Activated naive CD4-positive, alpha-beta T cell treated with anti-CD3 and anti-CD28 coated beads for 36 hours (primary cell): ENCODE measurements at regions of chr2 and their contacts with region 1.

Region 1: DNA sequence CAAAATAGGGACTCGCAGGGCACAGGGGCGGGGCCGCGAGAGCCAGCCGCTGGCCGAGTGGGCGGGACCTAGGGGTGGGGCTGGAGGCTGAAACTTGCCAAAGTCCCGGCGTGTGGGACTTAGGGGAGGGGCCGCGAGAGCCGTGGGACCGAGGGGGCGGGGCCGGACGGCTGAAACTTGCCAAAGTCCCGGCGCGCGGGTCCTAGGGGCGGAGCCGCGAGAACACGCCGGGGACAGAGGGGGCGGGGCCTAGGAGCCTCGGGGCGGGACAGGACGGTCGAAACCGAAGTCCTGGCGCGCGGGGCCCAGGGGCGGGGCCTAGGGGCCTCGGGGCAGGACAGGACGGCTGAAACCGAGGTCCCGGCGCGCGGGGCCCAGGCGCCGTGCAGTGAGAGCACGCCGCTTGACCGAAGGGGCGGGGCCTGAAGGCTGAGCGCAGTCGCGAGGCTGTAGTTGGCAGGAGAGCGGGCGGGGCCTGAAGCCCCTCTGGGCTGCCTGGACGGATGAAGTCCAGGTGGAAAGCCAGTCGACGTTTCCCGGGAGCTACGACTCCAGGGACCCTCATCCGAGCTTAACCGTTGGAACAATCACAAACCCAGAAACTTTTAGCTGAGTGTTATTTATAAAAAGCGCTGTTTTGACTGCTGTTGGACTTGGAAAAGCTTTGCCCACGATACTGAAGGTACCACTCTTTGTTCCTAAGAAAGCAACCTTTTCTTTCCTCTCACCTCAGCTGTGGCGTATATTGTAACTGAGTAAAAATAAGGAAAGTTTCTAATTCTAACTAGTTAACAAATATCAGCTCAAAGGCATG is 475 bp upstream of the BARD1 start:
- DNase-seq: peak; percentile 99
- H3K4me3 Mint-ChIP-seq: peak overlapping the region; percentile 96
- H3K27ac Mint-ChIP-seq: peak overlapping the region; percentile 70
- H3K4me1 Mint-ChIP-seq: peaks cover 24% of the 10 kb centered on the region
- H3K27me3 Mint-ChIP-seq: peaks cover 4% of the 10 kb centered on the region

Region 2: DNA sequence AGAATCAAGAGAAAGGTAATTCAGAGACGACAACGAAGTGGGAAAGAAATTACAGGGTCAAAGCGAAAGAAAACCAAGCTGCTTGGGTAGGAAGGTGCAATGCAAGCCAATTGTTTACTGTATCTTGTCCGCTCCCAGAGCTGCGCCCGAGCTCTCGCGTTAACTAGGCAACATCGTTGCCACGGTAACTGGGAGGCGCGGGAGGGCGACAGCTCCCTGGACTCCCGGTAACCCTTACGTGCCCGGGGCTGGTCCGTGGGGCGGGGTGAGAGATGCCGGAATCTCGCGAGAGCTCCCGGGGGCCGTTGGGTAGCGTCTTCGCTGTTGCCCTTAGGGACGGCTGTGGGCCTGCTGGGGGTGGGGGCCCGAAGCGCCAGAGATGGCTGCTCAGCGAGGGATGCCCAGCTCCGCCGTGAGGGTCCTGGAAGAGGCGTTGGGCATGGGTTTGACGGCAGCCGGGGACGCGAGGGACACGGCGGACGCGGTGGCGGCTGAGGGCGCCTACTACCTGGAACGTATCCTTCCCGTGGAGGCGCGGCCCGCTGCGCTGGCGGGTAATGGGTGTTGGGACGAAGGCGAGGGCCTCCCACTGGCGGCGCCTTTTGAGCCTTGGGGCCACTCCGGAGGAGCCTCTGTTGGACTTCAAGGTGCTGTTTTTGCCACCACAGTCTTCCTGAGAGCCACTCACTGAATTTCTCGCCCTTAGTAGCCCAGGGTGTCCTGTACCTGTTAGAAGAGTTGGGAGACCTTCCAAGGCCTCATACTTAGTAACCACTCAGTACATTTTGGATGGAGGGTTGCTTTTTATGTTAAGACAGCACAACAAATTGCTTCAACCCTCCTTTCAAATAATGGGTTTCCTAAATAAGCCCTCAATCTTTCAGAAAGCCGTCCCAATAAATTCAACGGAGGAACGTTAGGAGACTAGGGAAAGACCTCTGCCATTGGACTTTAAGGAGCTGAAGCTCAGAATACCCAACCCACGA is 1525.6 kb before region 1 on chr2 and contains the start of gene SPAG16:
- CTCF ChIA-PET with region 1: no interaction called
- intact Hi-C with region 1: loop called (anchors 1 kb)
- DNase-seq: peak; percentile 98
- H3K4me3 Mint-ChIP-seq: peak within 1 kb of the TSS; percentile 92
- H3K27ac Mint-ChIP-seq: peak within 1 kb of the TSS; percentile 88
- H3K4me1 Mint-ChIP-seq: peaks cover 32% of the 10 kb centered on the region
- H3K27me3 Mint-ChIP-seq: no peaks in the 10 kb centered on the region
- total RNA-seq, gene SPAG16: 8.4 to 8.8 TPM

Region 3: GRCh38 chr2:214088536-214088935 is 721.4 kb before region 1 on chr2:
- CTCF ChIA-PET with region 1: no interaction called
- intact Hi-C with region 1: no loop called
- DNase-seq: no peak
- H3K4me3 Mint-ChIP-seq: no peak overlapping the region
- H3K27ac Mint-ChIP-seq: no peak overlapping the region
- H3K4me1 Mint-ChIP-seq: no peaks in the 10 kb centered on the region
- H3K27me3 Mint-ChIP-seq: no peaks in the 10 kb centered on the region

Region 4: DNA sequence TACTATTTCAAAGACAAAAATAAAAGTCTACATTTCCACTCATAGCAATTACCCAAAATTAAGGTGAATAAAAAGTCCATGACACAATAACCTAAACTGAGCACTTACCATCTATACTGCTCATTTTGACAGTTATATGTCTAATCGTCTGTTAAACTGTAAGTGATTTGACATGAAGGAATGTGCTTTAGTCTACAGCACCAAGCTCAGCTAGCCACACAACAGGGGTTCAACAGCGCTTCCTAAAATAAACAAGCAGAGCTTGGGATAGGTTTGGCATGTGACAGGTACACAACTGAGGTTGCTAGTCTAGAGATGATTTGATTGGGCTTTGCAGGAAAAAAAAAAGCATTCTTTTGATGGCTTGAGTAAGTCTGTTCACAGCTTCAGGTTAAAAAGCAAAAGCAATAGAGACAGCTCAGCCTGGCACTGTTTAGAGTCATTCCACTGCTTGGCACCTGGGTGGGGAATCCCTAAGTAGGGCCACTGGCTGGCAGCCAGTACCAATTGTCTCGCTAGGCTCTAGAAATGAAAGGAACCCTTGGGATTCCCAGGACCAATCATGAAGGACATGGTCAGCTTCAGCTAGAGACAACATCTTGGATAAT is 79.1 kb before region 1 on chr2:
- CTCF ChIA-PET with region 1: no interaction called
- intact Hi-C with region 1: loop called (anchors 5 kb)
- DNase-seq: peak; percentile 13
- H3K4me3 Mint-ChIP-seq: no peak overlapping the region
- H3K27ac Mint-ChIP-seq: no peak overlapping the region
- H3K4me1 Mint-ChIP-seq: no peaks in the 10 kb centered on the region
- H3K27me3 Mint-ChIP-seq: no peaks in the 10 kb centered on the region

Region 5: GRCh38 chr2:215269397-215270119 is 459.6 kb after region 1 on chr2:
- CTCF ChIA-PET with region 1: no interaction called
- intact Hi-C with region 1: loop called (anchors 2 kb)
- DNase-seq: peak; percentile 69
- H3K4me3 Mint-ChIP-seq: no peak overlapping the region
- H3K27ac Mint-ChIP-seq: no peak overlapping the region
- H3K4me1 Mint-ChIP-seq: peaks cover 3% of the 10 kb centered on the region
- H3K27me3 Mint-ChIP-seq: no peaks in the 10 kb centered on the region

Region 6: GRCh38 chr2:215680605-215681598 is 870.9 kb after region 1 on chr2:
- CTCF ChIA-PET with region 1: no interaction called
- intact Hi-C with region 1: loop called (anchors 2 kb)
- DNase-seq: peak; percentile 60
- H3K4me3 Mint-ChIP-seq: peak overlapping the region; percentile 34
- H3K27ac Mint-ChIP-seq: peak overlapping the region; percentile 65
- H3K4me1 Mint-ChIP-seq: peaks cover 35% of the 10 kb centered on the region
- H3K27me3 Mint-ChIP-seq: no peaks in the 10 kb centered on the region

Region 7: DNA sequence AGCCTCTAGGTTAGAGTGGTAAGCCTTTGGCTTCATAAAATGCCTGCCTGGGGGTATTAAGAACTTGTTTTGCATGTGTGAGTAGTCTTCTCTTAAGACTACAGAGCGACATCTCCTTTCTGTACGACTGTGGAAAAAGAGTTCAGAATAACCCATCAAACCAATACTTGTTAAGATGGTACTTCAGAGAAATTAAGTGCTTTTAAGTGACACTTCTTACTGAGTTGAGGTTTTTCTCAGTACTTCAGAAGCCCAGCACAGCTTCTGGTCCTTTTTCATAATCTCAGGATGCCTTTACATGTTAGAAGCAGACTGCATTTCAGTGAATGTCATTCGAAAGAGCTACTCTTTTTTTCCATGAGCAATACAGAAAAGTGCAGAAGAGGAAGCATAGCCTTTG is 1310.0 kb after region 1 on chr2:
- CTCF ChIA-PET with region 1: no interaction called
- intact Hi-C with region 1: loop called (anchors 2 kb)
- DNase-seq: peak; percentile 31
- H3K4me3 Mint-ChIP-seq: peak overlapping the region; percentile 33
- H3K27ac Mint-ChIP-seq: peak overlapping the region; percentile 95
- H3K4me1 Mint-ChIP-seq: peaks cover 79% of the 10 kb centered on the region
- H3K27me3 Mint-ChIP-seq: no peaks in the 10 kb centered on the region